ENCODE measurements at regions of chr17 and their contacts with region 1.

Region 1: DNA sequence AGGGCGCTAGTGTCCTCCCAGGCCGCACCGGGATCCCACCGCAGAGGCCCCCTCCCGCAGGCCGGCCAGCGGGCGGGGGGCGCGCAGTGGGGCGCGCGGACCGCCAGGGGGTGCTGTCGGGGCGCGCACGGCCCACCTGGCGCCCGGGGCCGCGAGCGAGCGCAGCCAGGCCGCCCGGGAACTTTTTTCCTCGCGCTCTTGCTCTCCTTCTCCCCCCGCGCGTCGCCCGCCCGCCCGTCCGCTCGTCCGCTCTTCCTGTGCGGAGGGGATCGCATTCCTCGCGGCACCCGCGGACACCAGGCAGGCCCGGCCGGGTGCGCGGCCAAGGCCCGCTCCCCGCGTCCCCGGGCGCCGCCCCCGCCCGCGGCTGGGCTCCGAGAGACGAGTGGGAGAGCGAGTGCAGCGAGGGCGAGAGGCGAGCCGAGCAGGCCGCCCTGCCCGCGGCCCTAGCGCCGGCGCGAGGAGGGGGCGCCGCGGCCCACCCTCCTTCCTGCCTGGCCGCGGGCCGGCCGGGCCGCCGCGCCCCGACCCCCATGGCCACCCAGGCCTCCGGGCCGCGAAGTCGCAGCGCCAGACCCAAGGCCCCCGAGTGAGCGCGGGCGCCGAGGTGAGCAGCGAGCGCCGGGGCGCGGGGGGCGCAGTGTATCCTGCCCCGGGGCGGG is at the start of gene RAI1:
- DNase-seq: peak; percentile 85
- H3K4me3 ChIP-seq: peak within 1 kb of the TSS; percentile 92
- H3K27ac ChIP-seq: peak within 1 kb of the TSS; percentile 76
- H3K4me1 ChIP-seq: peaks cover 52% of the 10 kb centered on the region
- CTCF ChIP-seq: peak; percentile 67; the same call in 1 of the 2 replicates
- total RNA-seq, gene RAI1: 17.1 and 20.1 TPM in 2 replicates

Region 2: DNA sequence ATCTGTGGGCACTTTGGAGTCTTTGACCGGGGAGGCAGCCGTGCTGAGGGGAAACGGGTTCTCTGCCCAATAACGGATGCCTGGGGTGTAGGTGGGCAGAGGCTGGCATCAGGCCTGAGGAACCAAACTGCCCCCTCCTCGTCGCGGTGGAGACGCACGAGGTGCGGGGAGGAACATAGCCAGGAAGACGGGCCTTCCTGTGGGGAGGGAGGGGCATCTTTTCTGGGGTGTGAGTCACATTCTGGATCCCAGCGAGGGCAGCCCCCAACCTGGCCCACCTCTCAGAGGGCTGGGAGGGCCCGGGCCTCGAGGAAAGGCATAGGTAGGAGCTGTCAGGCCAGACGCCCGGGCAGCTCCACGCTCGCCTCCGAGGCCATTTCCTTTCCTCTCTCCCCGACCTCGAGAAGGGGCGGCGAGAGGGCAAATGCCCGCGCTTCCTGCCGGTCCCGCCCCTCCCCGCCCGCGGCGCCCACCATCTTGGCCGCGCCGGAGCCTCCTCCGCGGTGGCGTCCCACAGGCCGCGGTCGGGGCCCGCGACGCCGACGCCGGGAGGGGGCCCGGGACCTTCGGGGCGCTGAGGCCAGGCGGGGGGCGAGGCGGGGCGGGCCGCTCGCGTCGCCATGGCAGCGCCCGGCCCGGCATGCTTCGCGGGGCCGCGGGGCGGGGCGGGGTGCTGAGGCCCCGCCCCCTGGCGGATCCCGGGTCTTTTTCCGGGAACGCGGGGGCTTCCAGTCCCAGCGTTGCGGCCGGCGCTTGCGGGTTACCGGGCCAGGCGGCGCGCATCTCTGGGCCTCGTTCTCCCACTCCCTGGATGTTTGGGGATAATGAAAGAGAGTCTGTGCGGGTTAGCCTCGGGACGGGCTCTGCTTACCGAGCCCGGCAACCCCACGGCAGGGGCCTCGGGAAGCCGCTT is 13.1 kb after region 1 on chr17:
- CTCF ChIA-PET with region 1: interaction called, 4 read pairs
- POLR2A ChIA-PET with region 1: interaction called, 20 read pairs
- intact Hi-C with region 1: no loop called
- DNase-seq: peak; percentile 73
- H3K4me3 ChIP-seq: peak overlapping the region; percentile 79
- H3K27ac ChIP-seq: peak overlapping the region; percentile 74
- H3K4me1 ChIP-seq: peaks cover 84% of the 10 kb centered on the region
- CTCF ChIP-seq: no peak

Region 3: DNA sequence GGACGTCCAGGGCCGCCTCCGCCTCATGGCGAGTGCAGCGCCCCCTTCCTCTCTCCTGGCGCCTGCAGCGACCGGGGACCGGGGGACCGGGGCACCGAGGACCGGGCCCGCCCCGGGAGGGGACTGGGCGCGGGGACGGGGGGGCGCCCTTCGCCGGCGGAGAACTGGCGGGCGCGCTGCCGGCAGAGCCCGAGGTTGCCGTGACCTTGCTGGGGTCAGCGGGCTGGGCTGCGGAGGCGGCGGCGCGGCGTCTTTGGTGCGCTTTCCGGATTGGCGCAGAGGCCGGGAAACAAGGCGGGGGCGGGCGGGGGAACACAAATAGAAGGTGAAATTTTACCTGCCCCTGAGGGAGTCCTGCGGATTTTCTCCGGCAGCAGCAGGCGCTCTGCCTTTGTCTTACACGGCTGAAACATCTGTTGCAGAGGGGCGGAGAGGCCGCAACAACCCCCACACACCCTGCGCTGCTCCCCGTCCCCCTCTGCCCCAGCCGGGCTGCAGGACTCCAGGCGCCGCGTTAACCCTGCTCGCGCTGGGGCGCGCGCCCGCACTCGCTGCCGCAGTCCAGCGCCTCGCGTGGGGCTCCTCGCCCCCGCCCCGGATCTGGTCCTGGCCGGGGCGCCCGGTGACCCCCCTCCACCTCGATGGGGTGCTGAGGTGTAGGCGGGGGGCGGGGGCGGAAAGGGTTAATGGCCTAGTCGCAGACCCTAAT is 102.0 kb after region 1 on chr17:
- CTCF ChIA-PET with region 1: no interaction called
- POLR2A ChIA-PET with region 1: no interaction called
- intact Hi-C with region 1: loop called (anchors 2 kb)
- DNase-seq: peak; percentile 93
- H3K4me3 ChIP-seq: peak overlapping the region; percentile 68
- H3K27ac ChIP-seq: peak overlapping the region; percentile 99
- H3K4me1 ChIP-seq: peaks cover 54% of the 10 kb centered on the region
- CTCF ChIP-seq: peak; percentile 66

Region 4: GRCh38 chr17:17859909-17860765 is 178.8 kb after region 1 on chr17:
- CTCF ChIA-PET with region 1: no interaction called
- POLR2A ChIA-PET with region 1: no interaction called
- intact Hi-C with region 1: loop called (anchors 1 kb)
- DNase-seq: peak; percentile 73
- H3K4me3 ChIP-seq: no peak overlapping the region
- H3K27ac ChIP-seq: no peak overlapping the region
- H3K4me1 ChIP-seq: no peaks in the 10 kb centered on the region
- CTCF ChIP-seq: peak; percentile 98

Region 5: GRCh38 chr17:18033442-18034099 is 352.3 kb after region 1 on chr17:
- CTCF ChIA-PET with region 1: no interaction called
- POLR2A ChIA-PET with region 1: no interaction called
- intact Hi-C with region 1: loop called (anchors 2 kb)
- DNase-seq: peak; percentile 87
- H3K4me3 ChIP-seq: no peak overlapping the region
- H3K27ac ChIP-seq: no peak overlapping the region
- H3K4me1 ChIP-seq: peaks cover 32% of the 10 kb centered on the region
- CTCF ChIP-seq: peak; percentile 86